Heart left ventricle (tissue), 16 donors: ENCODE measurements at regions of chr19 and their contacts with region 1.

Region 1: GRCh38 chr19:6424939-6425731 is 524 bp upstream of the KHSRP start:
- DNase-seq: peak; percentile 99 to 100 (median 100)
- ATAC-seq: peak; percentile 94 to 97 (median 96)
- H3K4me3 ChIP-seq: peak overlapping the region in 10 of 12 donors; percentile 24 to 96 (median 76)
- H3K27ac ChIP-seq: peak overlapping the region; percentile 59 to 89 (median 84)
- H3K4me1 ChIP-seq: peaks cover 0 to 41% (median 21%) of the 10 kb centered on the region in 12 donors
- H3K27me3 ChIP-seq: no peaks in the 10 kb centered on the region
- CTCF ChIP-seq: peak in 2 of 12 donors; percentile 14 to 26
- POLR2A ChIP-seq: peak in 1 of 2 donors; percentile 31

Region 2: GRCh38 chr19:6350688-6351087 is 74.4 kb before region 1 on chr19:
- intact Hi-C with region 1: no loop called
- DNase-seq: no peak
- ATAC-seq: no peak
- H3K4me3 ChIP-seq: no peak overlapping the region
- H3K27ac ChIP-seq: no peak overlapping the region
- H3K4me1 ChIP-seq: no peaks in the 10 kb centered on the region
- H3K27me3 ChIP-seq: no peaks in the 10 kb centered on the region
- CTCF ChIP-seq: no peak
- POLR2A ChIP-seq: no peak

Region 3: GRCh38 chr19:6362027-6362350 is 63.1 kb before region 1 on chr19:
- intact Hi-C with region 1: loop called in 1 of 10 experiments (anchors 1 kb)
- DNase-seq: peak in 1 of 5 donors; percentile 37
- ATAC-seq: peak in 3 of 4 donors; percentile 10 to 23 (median 20)
- H3K4me3 ChIP-seq: peak overlapping the region; percentile 72 to 99 (median 84)
- H3K27ac ChIP-seq: peak overlapping the region; percentile 69 to 94 (median 89)
- H3K4me1 ChIP-seq: peaks cover 0 to 17% (median 7%) of the 10 kb centered on the region in 12 donors
- H3K27me3 ChIP-seq: no peaks in the 10 kb centered on the region
- CTCF ChIP-seq: no peak
- POLR2A ChIP-seq: no peak

Region 4: DNA sequence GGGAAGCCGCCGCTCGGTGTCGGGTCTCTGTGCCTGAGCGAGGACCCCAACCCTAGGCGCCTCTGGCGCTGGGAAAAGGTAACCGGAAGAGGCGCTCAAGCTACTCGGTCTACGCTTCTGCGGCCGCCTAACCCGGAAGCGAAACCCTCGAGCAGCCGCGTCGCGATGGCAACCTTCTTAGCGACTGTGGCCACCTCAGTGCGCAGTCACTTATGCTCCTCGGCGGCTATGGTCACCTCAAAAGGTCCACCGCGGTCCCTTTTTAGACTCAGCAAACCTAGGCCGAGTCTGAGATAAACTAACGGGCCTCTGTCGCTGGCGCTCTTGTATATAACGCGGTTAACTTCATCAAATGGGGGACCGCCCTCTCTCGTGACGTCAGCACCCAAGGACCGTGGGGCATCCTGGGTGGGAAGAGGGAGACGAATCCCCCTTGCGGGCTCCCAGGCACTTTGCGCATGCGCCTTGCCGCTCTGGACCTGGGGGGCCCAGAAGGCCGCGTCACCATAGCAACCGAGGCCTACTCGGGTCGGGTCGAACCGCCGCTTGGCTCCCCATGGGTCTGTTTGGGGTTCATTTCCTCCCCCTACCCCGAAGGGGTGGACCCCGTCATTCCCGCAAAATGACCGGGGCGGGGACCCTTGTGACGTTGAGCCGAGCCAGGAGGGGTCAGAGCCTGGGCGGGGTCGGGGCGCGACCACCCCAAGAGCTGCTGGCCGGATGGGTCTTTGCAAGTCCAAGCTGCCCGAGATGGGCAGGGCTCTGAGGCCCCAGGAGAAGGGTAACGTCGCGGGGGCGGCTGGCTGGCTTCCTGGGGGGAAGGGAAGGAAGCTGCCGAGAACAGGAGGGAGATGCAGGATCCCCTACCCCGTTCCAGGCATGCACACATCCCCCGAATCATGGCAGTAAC is 31.8 kb before region 1 on chr19 and contains the start of gene GTF2F1:
- intact Hi-C with region 1: loop called in 2 of 10 experiments (anchors 1 to 2 kb)
- DNase-seq: peak; percentile 96 to 98 (median 98)
- ATAC-seq: peak; percentile 92 to 96 (median 94)
- H3K4me3 ChIP-seq: peak within 1 kb of the TSS; percentile 60 to 99 (median 81)
- H3K27ac ChIP-seq: peak within 1 kb of the TSS; percentile 87 to 98 (median 94)
- H3K4me1 ChIP-seq: peaks cover 0 to 17% (median 10%) of the 10 kb centered on the region in 12 donors
- H3K27me3 ChIP-seq: no peaks in the 10 kb centered on the region
- CTCF ChIP-seq: peak in 4 of 12 donors; percentile 15 to 33 (median 25)
- POLR2A ChIP-seq: peak in 1 of 2 donors; percentile 40
- total RNA-seq, gene GTF2F1: 20.8 to 41.8 (median 29.8) TPM

Region 5: GRCh38 chr19:6460101-6460853 is 35.1 kb after region 1 on chr19:
- intact Hi-C with region 1: loop called in 1 of 10 experiments (anchors 1 kb)
- DNase-seq: peak; percentile 95 to 98 (median 98)
- ATAC-seq: peak; percentile 92 to 96 (median 94)
- H3K4me3 ChIP-seq: peak overlapping the region; percentile 32 to 89 (median 78)
- H3K27ac ChIP-seq: peak overlapping the region in 11 of 12 donors; percentile 55 to 91 (median 75)
- H3K4me1 ChIP-seq: peaks cover 0 to 32% (median 8%) of the 10 kb centered on the region in 12 donors
- H3K27me3 ChIP-seq: peaks cover 12 to 27% (median 17%) of the 10 kb centered on the region in 9 donors
- CTCF ChIP-seq: peak; percentile 15 to 69 (median 54)
- POLR2A ChIP-seq: peak in 1 of 2 donors; percentile 31